Ascending aorta (tissue), 2 donors: ENCODE measurements at regions of chr17 and their contacts with region 1.

Region 1: DNA sequence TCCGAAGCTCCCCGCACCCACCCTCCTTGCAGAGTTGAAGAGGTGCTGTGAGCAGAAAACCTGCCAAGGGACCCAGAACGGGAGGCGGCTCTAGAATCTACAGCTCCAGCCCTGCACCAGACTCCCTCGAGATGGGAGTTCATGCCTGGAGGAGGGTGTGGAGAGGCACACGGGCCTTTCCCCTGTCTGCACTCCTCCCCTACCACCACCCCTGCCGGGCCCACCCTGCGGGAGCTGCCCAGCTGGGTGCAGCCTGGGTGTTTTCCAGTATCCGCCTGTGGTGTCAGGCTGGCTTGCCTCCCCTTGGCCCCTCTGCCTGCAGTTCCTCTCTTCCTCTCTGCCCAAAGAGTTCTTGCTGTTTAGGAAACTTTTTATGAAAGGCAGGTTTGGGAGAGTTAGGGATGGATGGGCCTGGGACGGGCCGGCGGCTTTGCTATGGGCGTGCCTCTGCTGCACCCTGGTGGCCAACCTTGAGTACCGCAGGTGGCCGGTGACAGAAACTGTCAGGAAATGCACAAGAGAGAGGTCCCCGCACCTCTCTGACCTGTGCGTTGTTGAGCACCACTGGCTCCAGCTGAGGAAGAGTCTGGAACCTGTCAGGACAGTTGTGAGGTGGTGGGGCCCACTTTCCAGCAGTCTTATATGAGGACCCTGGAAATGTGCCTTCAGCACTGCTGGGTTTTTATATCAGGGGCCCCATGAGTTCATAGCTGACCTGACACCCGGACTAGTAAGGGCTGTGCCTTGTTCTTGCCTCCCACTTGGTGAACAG is 354.1 kb downstream of the SEC14L1 start:
- DNase-seq: peak in 1 of 2 donors; percentile 88
- H3K4me3 ChIP-seq: no peak overlapping the region
- H3K27ac ChIP-seq: peak overlapping the region in 1 of 2 donors; percentile 5
- H3K4me1 ChIP-seq: peaks cover 7 to 12% of the 10 kb centered on the region in 2 donors
- H3K27me3 ChIP-seq: no peaks in the 10 kb centered on the region
- CTCF ChIP-seq: peak; percentile 95 to 99 (median 96)

Region 2: GRCh38 chr17:77088455-77089123 is 406.3 kb before region 1 on chr17:
- intact Hi-C with region 1: loop called (anchors 5 kb)
- DNase-seq: peak; percentile 81 to 98
- H3K4me3 ChIP-seq: peak overlapping the region; percentile 79 to 90
- H3K27ac ChIP-seq: peak overlapping the region; percentile 89 to 92
- H3K4me1 ChIP-seq: peaks cover 0 to 16% of the 10 kb centered on the region in 2 donors
- H3K27me3 ChIP-seq: no peaks in the 10 kb centered on the region
- CTCF ChIP-seq: peak; percentile 78 to 91 (median 81)

Region 3: GRCh38 chr17:77124192-77124889 is 370.5 kb before region 1 on chr17:
- intact Hi-C with region 1: no loop called
- DNase-seq: no peak
- H3K4me3 ChIP-seq: no peak overlapping the region
- H3K27ac ChIP-seq: peak overlapping the region; percentile 22 to 44
- H3K4me1 ChIP-seq: peaks cover 0 to 15% of the 10 kb centered on the region in 2 donors
- H3K27me3 ChIP-seq: no peaks in the 10 kb centered on the region
- CTCF ChIP-seq: no peak

Region 4: DNA sequence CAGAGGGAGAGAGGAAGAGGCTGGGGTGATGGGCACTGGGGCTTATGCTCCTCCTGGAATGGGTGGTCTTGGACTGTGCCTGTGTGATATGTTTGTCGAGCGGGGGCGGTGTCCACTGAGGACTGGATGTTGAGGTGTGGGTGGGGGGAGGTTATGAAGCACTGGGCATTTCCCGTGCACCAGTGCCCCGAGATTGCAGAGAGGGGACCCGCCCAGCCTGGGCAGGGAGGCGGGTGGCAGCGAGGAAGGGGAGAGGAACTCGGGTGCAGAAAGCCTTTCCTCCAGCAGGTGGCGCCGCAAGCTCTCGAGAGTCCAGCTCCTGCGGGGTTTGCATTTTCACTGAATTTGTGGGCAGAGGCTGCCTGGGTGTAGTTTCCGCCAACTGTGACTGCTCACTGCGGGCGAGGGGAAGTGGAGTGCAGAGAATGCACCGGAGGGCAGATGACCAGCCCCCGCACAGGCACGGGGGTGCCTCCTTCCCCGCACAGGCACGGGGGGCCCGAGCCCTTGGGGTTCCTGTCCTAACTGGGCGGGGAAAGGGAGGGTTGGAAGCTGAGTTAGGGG is 163.5 kb before region 1 on chr17:
- intact Hi-C with region 1: loop called (anchors 1 kb)
- DNase-seq: peak; percentile 74 to 97
- H3K4me3 ChIP-seq: peak overlapping the region in 1 of 2 donors; percentile 25
- H3K27ac ChIP-seq: no peak overlapping the region
- H3K4me1 ChIP-seq: peaks cover 0 to 6% of the 10 kb centered on the region in 2 donors
- H3K27me3 ChIP-seq: no peaks in the 10 kb centered on the region
- CTCF ChIP-seq: peak; percentile 92 to 99 (median 94)